ENCODE measurements at regions of chr7 and their contacts with region 1.

Region 1: GRCh38 chr7:142587578-142588191 is 161.6 kb upstream of the PRSS1 start:
- DNase-seq: peak; percentile 68
- H3K4me3 ChIP-seq: no peak overlapping the region
- H3K27ac ChIP-seq: no peak overlapping the region
- H3K4me1 ChIP-seq: peaks cover 15% of the 10 kb centered on the region
- H3K27me3 ChIP-seq: no peaks in the 10 kb centered on the region
- CTCF ChIP-seq: peak; percentile 84 to 87

Region 2: GRCh38 chr7:142357953-142358520 is 229.6 kb before region 1 on chr7:
- CTCF ChIA-PET with region 1: no interaction called
- dilution Hi-C with region 1: no loop called
- in situ Hi-C with region 1: no loop called
- intact Hi-C with region 1: loop called (anchors 10 kb)
- DNase-seq: peak; percentile 65
- H3K4me3 ChIP-seq: no peak overlapping the region
- H3K27ac ChIP-seq: no peak overlapping the region
- H3K4me1 ChIP-seq: no peaks in the 10 kb centered on the region
- H3K27me3 ChIP-seq: no peaks in the 10 kb centered on the region
- CTCF ChIP-seq: peak; percentile 82 to 92

Region 3: GRCh38 chr7:142375666-142376313 is 211.9 kb before region 1 on chr7:
- CTCF ChIA-PET with region 1: interaction called, 25 read pairs
- dilution Hi-C with region 1: no loop called
- in situ Hi-C with region 1: no loop called
- intact Hi-C with region 1: no loop called
- DNase-seq: peak; percentile 66
- H3K4me3 ChIP-seq: no peak overlapping the region
- H3K27ac ChIP-seq: no peak overlapping the region
- H3K4me1 ChIP-seq: peaks cover 17% of the 10 kb centered on the region
- H3K27me3 ChIP-seq: no peaks in the 10 kb centered on the region
- CTCF ChIP-seq: peak; percentile 31 to 58

Region 4: GRCh38 chr7:142557971-142558582 is 29.6 kb before region 1 on chr7:
- CTCF ChIA-PET with region 1: interaction called, 9 read pairs
- dilution Hi-C with region 1: no loop called
- in situ Hi-C with region 1: no loop called
- intact Hi-C with region 1: loop called (anchors 2 kb)
- DNase-seq: peak; percentile 28
- H3K4me3 ChIP-seq: no peak overlapping the region
- H3K27ac ChIP-seq: peak overlapping the region; percentile 88
- H3K4me1 ChIP-seq: peaks cover 42% of the 10 kb centered on the region
- H3K27me3 ChIP-seq: no peaks in the 10 kb centered on the region
- CTCF ChIP-seq: peak; percentile 70 to 93